Calu3 (cell line): ENCODE measurements at regions of chr5 and their contacts with region 1.

Region 1: GRCh38 chr5:38441453-38442246 is 114.8 kb downstream of the LIFR start:
- DNase-seq: peak; percentile 87
- H3K4me3 Mint-ChIP-seq: no peak overlapping the region
- H3K27ac Mint-ChIP-seq: no peak overlapping the region
- H3K4me1 Mint-ChIP-seq: no peaks in the 10 kb centered on the region
- H3K27me3 Mint-ChIP-seq: peaks cover 59% of the 10 kb centered on the region
- CTCF ChIP-seq: peak; percentile 88

Region 2: GRCh38 chr5:38382898-38383297 is 58.8 kb before region 1 on chr5:
- CTCF ChIA-PET with region 1: interaction called, 14 read pairs
- intact Hi-C with region 1: no loop called
- DNase-seq: peak; percentile 76
- H3K4me3 Mint-ChIP-seq: no peak overlapping the region
- H3K27ac Mint-ChIP-seq: no peak overlapping the region
- H3K4me1 Mint-ChIP-seq: no peaks in the 10 kb centered on the region
- H3K27me3 Mint-ChIP-seq: peaks cover 52% of the 10 kb centered on the region
- CTCF ChIP-seq: peak; percentile 59

Region 3: DNA sequence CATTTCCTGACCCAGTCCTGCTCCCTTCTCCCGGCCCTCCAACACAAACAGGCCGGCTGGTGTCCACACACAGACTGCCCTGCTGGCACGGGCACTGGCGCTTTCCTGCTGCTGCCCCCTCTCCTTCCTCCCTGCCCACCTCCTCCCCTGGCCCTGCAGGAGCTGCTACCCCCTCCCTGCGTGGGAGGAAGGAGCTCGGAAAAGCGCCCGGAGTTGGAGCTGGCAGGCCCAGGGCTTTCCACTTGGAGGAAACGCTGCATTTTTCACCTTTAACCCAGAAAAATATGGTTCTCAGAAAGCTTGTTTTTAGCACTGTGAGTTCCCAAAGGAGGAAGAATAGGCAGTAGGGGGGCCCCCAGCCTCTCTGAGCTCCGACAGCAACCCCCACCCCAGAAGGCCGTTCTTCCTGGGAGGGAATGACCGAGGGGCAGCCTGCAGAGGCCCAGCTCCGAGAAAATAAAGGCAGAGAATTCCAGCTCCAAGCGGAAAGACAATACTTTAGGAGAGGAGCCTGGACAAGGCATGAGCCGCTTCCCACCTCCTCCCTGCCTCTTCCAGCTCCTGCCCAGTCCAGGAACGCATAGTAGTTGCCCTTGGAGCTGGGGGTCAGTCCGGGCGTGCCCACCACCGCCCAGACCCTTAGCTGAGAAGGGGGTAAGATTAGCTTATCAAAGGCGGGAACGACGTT is 25.8 kb after region 1 on chr5:
- CTCF ChIA-PET with region 1: no interaction called
- intact Hi-C with region 1: no loop called
- DNase-seq: no peak
- H3K4me3 Mint-ChIP-seq: no peak overlapping the region
- H3K27ac Mint-ChIP-seq: no peak overlapping the region
- H3K4me1 Mint-ChIP-seq: no peaks in the 10 kb centered on the region
- H3K27me3 Mint-ChIP-seq: no peaks in the 10 kb centered on the region
- CTCF ChIP-seq: no peak

Region 4: DNA sequence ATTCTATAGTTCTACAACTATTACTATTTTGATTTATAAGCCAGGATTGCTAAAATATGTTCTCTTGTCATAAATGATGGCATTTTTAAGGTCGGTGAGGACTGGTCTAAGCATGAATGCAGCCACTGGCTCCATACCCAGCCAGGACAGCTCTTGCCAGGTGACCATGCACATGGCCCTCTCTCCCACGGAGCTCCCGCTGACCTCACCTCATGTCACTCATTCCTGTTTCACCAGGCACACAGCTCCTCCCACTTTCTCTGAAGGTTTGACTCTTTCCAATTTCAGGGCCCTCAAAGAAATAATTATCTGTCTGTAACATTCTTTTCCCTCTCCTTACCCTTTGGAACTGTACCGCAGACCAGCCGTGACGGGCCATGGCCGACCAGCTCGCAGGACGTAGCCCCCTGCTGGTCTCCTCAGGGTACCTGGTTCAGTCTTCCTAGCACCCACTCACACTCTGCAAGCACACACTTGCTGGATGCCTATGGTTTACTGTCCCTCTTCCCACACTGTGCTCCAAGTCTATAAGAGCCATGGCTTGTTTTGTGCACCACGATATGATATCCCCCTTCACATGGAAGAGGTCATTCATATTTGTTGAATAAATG is 42.2 kb after region 1 on chr5:
- CTCF ChIA-PET with region 1: interaction called, 5 read pairs
- intact Hi-C with region 1: loop called (anchors 1 kb)
- DNase-seq: no peak
- H3K4me3 Mint-ChIP-seq: no peak overlapping the region
- H3K27ac Mint-ChIP-seq: no peak overlapping the region
- H3K4me1 Mint-ChIP-seq: no peaks in the 10 kb centered on the region
- H3K27me3 Mint-ChIP-seq: no peaks in the 10 kb centered on the region
- CTCF ChIP-seq: no peak

Region 5: GRCh38 chr5:38660194-38660668 is 218.6 kb after region 1 on chr5:
- CTCF ChIA-PET with region 1: interaction called, 74 read pairs
- intact Hi-C with region 1: no loop called
- DNase-seq: peak; percentile 85
- H3K4me3 Mint-ChIP-seq: peak overlapping the region; percentile 57
- H3K27ac Mint-ChIP-seq: peak overlapping the region; percentile 94
- H3K4me1 Mint-ChIP-seq: no peaks in the 10 kb centered on the region
- H3K27me3 Mint-ChIP-seq: no peaks in the 10 kb centered on the region
- CTCF ChIP-seq: no peak

Region 6: GRCh38 chr5:38734353-38734752 is 292.7 kb after region 1 on chr5:
- CTCF ChIA-PET with region 1: no interaction called
- intact Hi-C with region 1: loop called (anchors 5 kb)
- DNase-seq: no peak
- H3K4me3 Mint-ChIP-seq: no peak overlapping the region
- H3K27ac Mint-ChIP-seq: no peak overlapping the region
- H3K4me1 Mint-ChIP-seq: no peaks in the 10 kb centered on the region
- H3K27me3 Mint-ChIP-seq: peaks cover 70% of the 10 kb centered on the region
- CTCF ChIP-seq: no peak

Region 7: GRCh38 chr5:38922199-38922598 is 480.5 kb after region 1 on chr5:
- CTCF ChIA-PET with region 1: interaction called, 11 read pairs
- intact Hi-C with region 1: loop called (anchors 5 kb)
- DNase-seq: peak; percentile 66
- H3K4me3 Mint-ChIP-seq: no peak overlapping the region
- H3K27ac Mint-ChIP-seq: no peak overlapping the region
- H3K4me1 Mint-ChIP-seq: no peaks in the 10 kb centered on the region
- H3K27me3 Mint-ChIP-seq: no peaks in the 10 kb centered on the region
- CTCF ChIP-seq: peak; percentile 81

Region 8: DNA sequence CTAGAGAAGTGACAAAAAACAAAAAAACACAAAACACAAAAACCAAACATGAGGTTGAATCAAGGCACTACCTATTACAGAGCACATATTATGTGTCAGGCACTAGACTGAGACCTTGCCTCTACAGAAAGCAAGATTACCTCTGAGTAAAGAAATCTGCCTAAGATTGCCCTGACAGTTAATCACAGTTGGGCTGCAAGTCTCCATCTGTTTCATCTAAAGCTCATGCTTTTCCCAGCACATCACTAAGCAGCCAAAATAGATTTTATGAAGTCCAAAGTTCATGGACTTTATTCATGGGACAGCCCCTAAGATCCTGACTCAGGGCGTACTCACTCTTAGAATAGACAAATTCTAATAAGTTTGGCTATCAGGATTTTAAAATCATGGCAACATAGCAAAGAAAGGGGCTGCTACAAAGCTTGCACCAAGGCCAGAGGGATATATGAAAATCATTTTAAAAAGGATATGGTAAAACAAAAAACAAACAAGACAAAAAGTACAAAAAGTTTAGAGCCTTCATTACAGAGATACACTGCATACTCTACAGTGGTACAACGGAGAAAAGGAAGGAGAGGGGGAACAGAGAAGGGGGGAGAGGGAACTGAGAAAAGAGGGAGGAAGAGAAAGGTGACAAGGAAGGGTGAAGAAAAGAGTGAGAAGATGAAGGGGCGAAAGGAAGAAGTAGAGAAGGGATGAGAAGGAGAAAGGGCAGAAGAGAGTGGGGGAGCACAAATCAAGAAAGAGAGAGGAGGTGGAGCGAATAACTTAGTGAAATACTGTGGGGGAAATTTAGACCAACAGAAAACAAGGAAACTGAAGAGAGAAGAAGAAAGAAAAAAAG is 574.3 kb after region 1 on chr5:
- CTCF ChIA-PET with region 1: no interaction called
- intact Hi-C with region 1: no loop called
- DNase-seq: no peak
- H3K4me3 Mint-ChIP-seq: no peak overlapping the region
- H3K27ac Mint-ChIP-seq: no peak overlapping the region
- H3K4me1 Mint-ChIP-seq: peaks cover 15% of the 10 kb centered on the region
- H3K27me3 Mint-ChIP-seq: no peaks in the 10 kb centered on the region
- CTCF ChIP-seq: no peak

Region 9: DNA sequence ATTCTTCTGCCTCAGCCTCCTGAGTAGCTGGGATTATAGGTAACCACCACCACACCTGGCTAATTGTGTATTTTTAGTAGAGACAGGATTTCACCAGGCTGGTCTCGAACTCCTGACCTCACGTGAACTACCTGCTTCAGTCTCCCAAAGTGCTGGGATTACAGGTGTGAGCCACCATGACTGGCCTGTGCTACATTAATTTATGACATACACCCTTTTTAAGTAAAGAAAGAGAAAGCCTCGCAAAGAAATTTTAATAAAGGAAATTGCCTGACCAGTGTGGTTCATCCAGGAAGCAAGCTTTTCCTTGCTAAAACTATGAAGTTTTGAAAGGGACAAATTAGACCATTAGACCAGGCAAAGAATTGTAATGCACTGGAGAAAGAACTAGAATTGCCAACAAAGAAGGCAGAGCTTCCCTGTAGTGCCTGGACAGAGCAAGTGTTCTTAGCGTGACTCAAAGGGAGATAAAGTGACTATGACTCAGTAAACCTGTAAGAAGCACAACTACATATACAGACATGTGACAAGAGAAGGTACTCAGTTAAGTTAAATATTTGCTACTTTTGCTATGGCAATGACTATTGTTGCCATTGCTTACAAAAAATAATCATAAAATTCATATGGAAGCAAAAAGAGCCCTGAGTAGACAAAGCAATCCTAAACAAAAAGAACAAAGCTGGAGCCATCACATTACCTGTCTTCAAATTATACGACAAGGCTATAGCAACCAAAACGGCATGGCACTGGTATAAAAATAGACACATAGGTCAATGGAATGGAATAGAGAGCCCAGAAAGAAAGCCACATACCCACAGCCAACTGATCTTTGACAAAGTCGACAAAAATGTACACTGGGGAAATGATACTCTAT is 723.1 kb after region 1 on chr5:
- CTCF ChIA-PET with region 1: no interaction called
- intact Hi-C with region 1: no loop called
- DNase-seq: peak; percentile 12
- H3K4me3 Mint-ChIP-seq: no peak overlapping the region
- H3K27ac Mint-ChIP-seq: peak overlapping the region; percentile 66
- H3K4me1 Mint-ChIP-seq: peaks cover 36% of the 10 kb centered on the region
- H3K27me3 Mint-ChIP-seq: no peaks in the 10 kb centered on the region
- CTCF ChIP-seq: no peak